ENCODE measurements at regions of chr13 and their contacts with region 1.

Region 1: DNA sequence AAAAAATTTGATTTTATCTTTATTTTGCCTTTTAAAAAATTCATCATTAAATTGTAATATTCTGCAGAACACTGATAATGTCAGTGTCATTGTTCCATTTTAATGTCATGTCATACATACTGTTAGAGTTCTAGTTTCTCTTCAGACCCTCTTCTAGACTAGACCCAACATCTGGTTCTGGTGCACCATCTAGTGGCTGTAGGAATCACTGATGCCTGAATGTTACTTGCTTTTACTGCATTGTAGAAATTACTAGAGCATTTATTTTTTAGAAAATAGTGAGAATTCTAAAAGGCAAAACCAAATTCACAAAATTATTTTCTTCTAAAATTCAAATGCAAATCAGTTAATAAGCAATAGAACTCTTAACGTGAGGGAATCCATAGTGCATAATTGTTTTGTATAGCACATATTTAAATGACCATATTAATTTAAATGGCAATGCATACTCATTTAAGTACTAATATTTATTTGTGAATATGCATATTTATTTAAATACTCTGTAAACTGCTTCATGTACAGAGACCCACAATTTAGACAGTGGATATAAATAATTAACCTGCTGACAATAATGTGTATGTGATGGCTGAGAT is 425.7 kb downstream of the KLF12 start:
- DNase-seq: no peak
- H3K4me3 ChIP-seq: no peak overlapping the region
- H3K27ac ChIP-seq: no peak overlapping the region
- H3K4me1 ChIP-seq: peaks cover 0 to 10% (median 0%) of the 10 kb centered on the region in 6 donors
- H3K27me3 ChIP-seq: no peaks in the 10 kb centered on the region
- CTCF ChIP-seq: peak; percentile 17 to 75 (median 60)
- POLR2A ChIP-seq: no peak

Region 2: GRCh38 chr13:72808917-72809500 is 899.5 kb before region 1 on chr13:
- intact Hi-C with region 1: loop called (anchors 10 kb)
- DNase-seq: no peak
- H3K4me3 ChIP-seq: no peak overlapping the region
- H3K27ac ChIP-seq: no peak overlapping the region
- H3K4me1 ChIP-seq: peaks cover 0 to 17% (median 5%) of the 10 kb centered on the region in 6 donors
- H3K27me3 ChIP-seq: no peaks in the 10 kb centered on the region
- CTCF ChIP-seq: peak; percentile 6 to 68 (median 42)
- POLR2A ChIP-seq: no peak

Region 3: GRCh38 chr13:73738626-73739025 is 30.1 kb after region 1 on chr13:
- intact Hi-C with region 1: no loop called
- DNase-seq: no peak
- H3K4me3 ChIP-seq: no peak overlapping the region
- H3K27ac ChIP-seq: no peak overlapping the region
- H3K4me1 ChIP-seq: no peaks in the 10 kb centered on the region
- H3K27me3 ChIP-seq: no peaks in the 10 kb centered on the region
- CTCF ChIP-seq: no peak
- POLR2A ChIP-seq: no peak

Measured in spleen (tissue), 13 donors.